ENCODE measurements at regions of chr9 and their contacts with region 1.

Region 1: GRCh38 chr9:37119907-37120842 is at the start of gene ZCCHC7:
- DNase-seq: peak; percentile 91
- ATAC-seq: peak; percentile 99
- H3K4me3 ChIP-seq: peak within 1 kb of the TSS; percentile 66 to 93
- H3K27ac ChIP-seq: peak within 1 kb of the TSS; percentile 93
- H3K4me1 ChIP-seq: peaks cover 21% of the 10 kb centered on the region
- H3K27me3 ChIP-seq: no peaks in the 10 kb centered on the region
- CTCF ChIP-seq: no peak
- total RNA-seq, gene ZCCHC7: 43.7 TPM

Region 2: DNA sequence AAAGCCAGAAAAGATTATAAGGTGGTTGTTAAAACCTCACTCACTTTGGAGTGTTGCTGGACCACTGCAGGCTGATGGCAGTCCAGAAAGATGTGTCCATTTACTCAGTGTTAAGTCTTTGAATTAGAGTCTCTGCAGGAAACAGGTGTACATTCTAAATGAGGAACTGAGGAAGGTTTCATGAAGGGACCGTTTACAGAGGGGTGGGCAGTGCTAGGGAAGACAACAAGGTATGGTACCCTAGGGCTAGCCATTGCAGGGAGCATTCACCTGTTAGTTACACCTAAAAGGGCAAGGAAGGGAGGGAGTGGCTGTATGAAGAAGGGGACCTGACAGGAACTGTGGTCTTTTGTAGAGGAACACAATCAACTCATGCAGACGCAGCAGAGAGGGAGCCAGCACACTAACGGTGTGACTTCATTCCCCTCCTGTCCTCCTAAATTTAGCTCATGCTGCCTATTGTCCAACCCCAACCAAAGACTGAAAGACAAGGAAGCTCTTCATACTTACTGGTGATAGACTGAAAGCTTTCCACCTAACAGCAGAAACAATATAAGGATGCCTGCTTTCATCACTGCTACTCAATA is 53.9 kb before region 1 on chr9:
- CTCF ChIA-PET with region 1: no interaction called
- POLR2A ChIA-PET with region 1: no interaction called
- in situ Hi-C with region 1: no loop called
- intact Hi-C with region 1: loop called (anchors 10 kb)
- DNase-seq: no peak
- ATAC-seq: no peak
- H3K4me3 ChIP-seq: no peak overlapping the region
- H3K27ac ChIP-seq: no peak overlapping the region
- H3K4me1 ChIP-seq: no peaks in the 10 kb centered on the region
- H3K27me3 ChIP-seq: peaks cover 30% of the 10 kb centered on the region
- CTCF ChIP-seq: no peak

Region 3: DNA sequence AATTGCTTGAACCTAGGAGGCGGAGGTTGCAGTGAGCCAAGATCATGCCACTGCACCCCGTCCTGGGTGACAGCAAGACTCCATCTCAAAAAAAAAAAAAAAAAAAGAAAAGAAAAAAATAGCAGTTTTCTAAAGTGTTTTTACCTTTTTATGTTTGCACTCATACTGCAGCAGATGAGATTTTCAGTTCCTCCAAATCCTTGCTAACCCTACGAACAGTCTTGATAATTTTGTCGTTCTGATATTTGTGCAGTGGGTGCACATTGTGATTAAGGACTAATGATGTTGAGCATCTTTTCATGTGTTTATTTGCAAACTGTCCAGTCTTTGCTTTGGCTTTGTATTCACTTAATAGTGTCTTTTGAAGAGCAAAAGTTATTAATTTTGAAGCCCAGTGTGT is 43.1 kb after region 1 on chr9:
- CTCF ChIA-PET with region 1: no interaction called
- POLR2A ChIA-PET with region 1: interaction called, 3 read pairs
- in situ Hi-C with region 1: no loop called
- intact Hi-C with region 1: loop called (anchors 1 kb)
- DNase-seq: no peak
- ATAC-seq: no peak
- H3K4me3 ChIP-seq: no peak overlapping the region
- H3K27ac ChIP-seq: no peak overlapping the region
- H3K4me1 ChIP-seq: no peaks in the 10 kb centered on the region
- H3K27me3 ChIP-seq: no peaks in the 10 kb centered on the region
- CTCF ChIP-seq: no peak

Region 4: GRCh38 chr9:37174247-37174646 is 54.1 kb after region 1 on chr9:
- CTCF ChIA-PET with region 1: no interaction called
- POLR2A ChIA-PET with region 1: no interaction called
- in situ Hi-C with region 1: no loop called
- intact Hi-C with region 1: no loop called
- DNase-seq: no peak
- ATAC-seq: no peak
- H3K4me3 ChIP-seq: no peak overlapping the region
- H3K27ac ChIP-seq: no peak overlapping the region
- H3K4me1 ChIP-seq: no peaks in the 10 kb centered on the region
- H3K27me3 ChIP-seq: no peaks in the 10 kb centered on the region
- CTCF ChIP-seq: no peak

Region 5: DNA sequence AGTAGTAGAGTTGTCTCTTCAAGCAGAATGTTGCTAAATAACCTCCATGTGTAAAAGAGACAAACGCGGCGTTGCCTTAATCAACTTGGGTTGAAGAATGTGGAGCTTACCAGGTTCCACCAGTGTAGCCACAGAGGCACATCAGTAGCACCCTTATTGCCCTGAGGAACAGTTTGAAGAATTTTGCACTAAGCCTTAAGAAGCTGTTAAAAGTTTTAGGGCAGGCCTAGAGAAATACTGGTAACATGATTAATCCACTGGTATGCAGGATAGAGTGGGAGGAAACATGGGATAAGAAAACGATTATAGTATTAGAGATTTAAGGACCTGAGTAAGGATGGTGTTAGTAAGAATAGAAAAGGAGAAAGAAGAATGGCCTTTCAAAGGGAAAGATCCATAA is 100.8 kb after region 1 on chr9:
- CTCF ChIA-PET with region 1: no interaction called
- POLR2A ChIA-PET with region 1: interaction called, 10 read pairs
- in situ Hi-C with region 1: no loop called
- intact Hi-C with region 1: no loop called
- DNase-seq: no peak
- ATAC-seq: no peak
- H3K4me3 ChIP-seq: no peak overlapping the region
- H3K27ac ChIP-seq: no peak overlapping the region
- H3K4me1 ChIP-seq: no peaks in the 10 kb centered on the region
- H3K27me3 ChIP-seq: no peaks in the 10 kb centered on the region
- CTCF ChIP-seq: no peak

Region 6: DNA sequence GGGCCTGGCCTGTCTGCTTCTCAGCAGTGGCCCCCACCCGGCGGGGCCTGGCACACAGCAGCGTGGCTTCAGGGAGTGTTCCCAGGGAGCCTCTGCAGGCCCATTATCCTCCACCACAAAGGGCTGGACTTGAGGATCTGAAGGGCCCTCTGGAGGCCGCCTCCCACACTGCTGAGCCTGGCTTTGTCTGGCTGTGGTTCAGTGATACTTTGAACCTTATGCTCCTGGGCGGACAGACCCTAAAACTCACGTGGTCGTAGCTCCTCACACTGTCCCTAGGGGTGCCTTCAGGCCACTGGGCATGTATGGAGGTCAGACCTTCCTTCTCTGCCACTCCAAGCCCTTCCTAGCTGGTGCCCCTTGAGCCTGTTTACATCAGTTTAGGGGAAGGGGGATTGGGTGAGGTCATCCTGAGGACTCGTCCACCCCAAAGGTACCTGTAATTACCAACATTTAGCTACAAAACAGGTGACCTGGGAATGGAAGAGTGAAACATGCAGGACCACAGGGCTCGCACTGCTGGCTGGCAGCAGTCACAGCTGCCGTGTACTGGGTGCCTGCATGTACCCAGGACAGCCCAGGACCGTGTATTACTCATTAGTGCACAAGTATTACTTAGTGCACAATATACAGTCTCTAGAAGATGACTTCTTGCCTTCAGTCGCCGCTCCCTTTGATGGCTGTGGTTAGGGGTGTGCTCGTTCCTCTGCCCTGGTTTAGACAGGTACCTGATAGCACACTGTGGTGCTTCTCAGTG is 310.8 kb after region 1 on chr9:
- CTCF ChIA-PET with region 1: no interaction called
- POLR2A ChIA-PET with region 1: no interaction called
- in situ Hi-C with region 1: no loop called
- intact Hi-C with region 1: no loop called
- DNase-seq: no peak
- ATAC-seq: peak; percentile 67
- H3K4me3 ChIP-seq: no peak overlapping the region
- H3K27ac ChIP-seq: peak overlapping the region; percentile 17; the same call in 1 of the 2 replicates
- H3K4me1 ChIP-seq: peaks cover 19% of the 10 kb centered on the region
- H3K27me3 ChIP-seq: no peaks in the 10 kb centered on the region
- CTCF ChIP-seq: no peak

Measured in Panc1 (cell line).